ENCODE measurements at regions of chr15 and their contacts with region 1.

Region 1: GRCh38 chr15:91022075-91022835 is at the start of gene VPS33B:
- DNase-seq: peak; percentile 90
- ATAC-seq: peak; percentile 91
- total RNA-seq, gene VPS33B: 4.2 TPM

Region 2: GRCh38 chr15:90001062-90001682 is 1021.1 kb before region 1 on chr15 and contains the start of gene ZNF710:
- intact Hi-C with region 1: no loop called
- DNase-seq: peak; percentile 79
- ATAC-seq: peak; percentile 59
- total RNA-seq, gene ZNF710: 5.4 TPM

Region 3: DNA sequence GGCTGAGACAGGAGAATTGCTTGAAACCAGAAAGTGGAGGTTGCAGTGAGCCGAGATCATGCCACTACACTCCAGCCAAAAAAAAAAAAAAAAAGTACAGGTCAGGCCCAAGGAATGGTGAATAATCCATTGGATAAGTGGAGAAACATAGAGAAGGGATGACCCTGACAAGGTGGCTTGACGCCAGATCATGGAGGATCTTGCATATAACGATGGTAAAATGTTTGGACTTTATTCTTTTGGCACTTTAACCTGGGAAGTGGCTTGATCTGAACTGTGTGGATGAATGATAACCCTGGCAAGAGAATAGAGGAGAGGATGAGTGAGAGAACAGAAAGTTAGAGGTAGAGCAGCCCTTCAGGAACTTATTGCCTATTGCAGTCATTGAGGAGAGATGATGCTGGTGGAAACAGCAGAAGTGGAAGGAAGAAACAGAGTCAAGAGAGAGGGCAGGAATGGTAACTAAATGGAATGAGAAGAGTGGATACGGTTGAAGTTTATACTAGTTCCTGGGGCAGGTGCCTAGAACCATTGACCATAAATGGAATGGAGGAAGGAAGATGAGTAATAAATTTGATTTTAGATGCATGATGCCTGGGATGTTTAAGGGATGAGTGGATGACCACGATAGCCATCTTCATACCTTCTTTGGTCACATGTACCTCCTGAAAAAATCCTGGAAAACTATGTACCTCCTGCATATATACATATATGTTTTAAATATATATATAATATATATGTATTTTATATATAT is 247.3 kb before region 1 on chr15:
- intact Hi-C with region 1: no loop called
- DNase-seq: no peak
- ATAC-seq: no peak

Region 4: DNA sequence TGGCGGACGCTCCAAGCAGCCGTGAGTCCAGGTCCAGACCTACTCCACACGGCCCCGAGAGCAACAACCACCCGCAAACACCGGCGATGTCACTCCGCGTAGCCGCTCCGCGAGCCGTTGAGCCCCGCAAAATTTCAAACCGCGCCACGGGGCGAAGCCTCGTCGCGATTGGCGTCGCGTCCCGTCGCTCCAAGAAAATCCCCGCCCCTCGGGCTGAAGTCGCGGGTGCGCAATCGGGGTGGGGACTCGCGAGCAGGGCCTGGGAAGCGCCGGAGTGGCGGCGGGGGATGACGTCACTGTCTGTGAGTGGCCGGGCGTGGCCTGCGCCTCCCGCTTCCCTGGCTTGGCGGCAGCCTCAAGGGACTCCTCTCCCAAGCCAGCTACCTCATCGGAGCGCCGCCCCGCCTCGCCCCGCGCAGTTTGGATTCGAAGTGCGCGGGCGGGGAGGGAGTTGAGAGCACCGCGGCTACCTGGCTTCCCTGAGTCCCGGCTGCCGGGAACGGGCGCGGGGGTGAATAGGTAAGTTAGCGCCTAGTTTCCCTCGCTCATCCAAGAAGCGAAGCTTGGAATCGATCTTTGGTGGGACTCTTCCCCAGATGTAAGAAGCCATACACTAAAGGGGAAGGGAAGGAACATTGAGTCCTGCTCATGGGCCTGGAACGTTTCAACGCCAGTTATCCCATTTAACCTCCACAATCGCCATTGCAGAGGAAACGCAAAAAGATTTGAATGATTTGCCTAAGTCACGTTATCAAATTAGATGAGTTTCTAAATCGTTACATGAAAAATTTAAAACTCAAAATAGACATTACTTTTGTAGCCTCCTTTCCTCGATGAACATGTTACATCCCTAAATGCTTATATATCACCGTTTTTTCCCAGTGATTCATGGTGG is 27.6 kb before region 1 on chr15 and contains the start of gene PRC1:
- intact Hi-C with region 1: loop called (anchors 1 kb)
- DNase-seq: peak; percentile 99
- ATAC-seq: peak; percentile 100
- total RNA-seq, gene PRC1: 4.0 TPM

Measured in Right ventricle myocardium inferior (tissue), 1 donor.